Prostate gland (tissue), 2 donors: ENCODE measurements at regions of chr11 and their contacts with region 1.

Region 1: GRCh38 chr11:64688534-64688982 is 34.4 kb downstream of the NRXN2 start:
- DNase-seq: peak; percentile 75
- H3K4me3 ChIP-seq: peak overlapping the region in 1 of 2 donors; percentile 21
- H3K27ac ChIP-seq: peak overlapping the region; percentile 28 to 41
- H3K4me1 ChIP-seq: no peaks in the 10 kb centered on the region
- H3K27me3 ChIP-seq: no peaks in the 10 kb centered on the region
- CTCF ChIP-seq: peak; percentile 68 to 92 (median 89)
- POLR2A ChIP-seq: no peak

Region 2: DNA sequence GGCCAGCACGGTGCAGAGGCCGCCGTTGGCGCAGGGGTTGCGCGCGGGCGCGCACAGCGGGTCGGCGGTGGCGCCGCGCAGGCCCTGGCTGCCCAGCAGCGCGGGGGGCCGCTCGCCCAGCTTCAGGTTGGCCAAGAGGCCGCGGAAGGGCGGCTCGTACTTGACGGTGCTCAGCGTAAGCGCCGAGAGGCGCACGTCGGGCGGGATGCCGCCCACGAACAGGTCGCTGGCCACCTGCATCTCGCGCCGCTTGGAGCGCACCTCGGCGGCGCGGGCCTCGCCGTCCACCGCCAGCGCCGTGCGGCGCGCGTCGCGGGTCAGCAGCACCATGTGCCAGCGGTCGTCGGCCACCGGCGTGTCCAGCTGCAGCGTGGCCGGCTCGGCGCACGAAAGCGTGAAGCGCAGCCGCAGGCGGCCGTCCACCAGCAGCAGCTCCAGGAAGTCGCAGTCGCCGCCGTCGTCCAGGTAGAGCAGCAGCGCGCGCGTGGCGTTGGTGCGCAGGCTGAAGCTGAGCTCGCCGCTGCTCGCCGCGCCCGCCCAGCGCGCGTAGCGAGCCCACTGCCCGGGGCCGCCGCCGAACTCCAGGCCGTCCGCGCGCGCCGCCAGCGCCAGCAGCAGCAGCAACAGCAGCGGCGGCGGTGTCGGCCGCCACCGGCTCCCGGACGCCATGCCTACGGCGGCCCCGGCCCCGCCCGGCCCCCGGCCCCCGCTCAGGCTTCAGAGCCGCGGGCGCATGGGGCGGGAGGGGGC is 24.6 kb after region 1 on chr11:
- intact Hi-C with region 1: no loop called
- DNase-seq: peak; percentile 33
- H3K4me3 ChIP-seq: peak overlapping the region in 1 of 2 donors; percentile 11
- H3K27ac ChIP-seq: no peak overlapping the region
- H3K4me1 ChIP-seq: no peaks in the 10 kb centered on the region
- H3K27me3 ChIP-seq: peaks cover 32% of the 10 kb centered on the region
- CTCF ChIP-seq: no peak
- POLR2A ChIP-seq: no peak

Region 3: GRCh38 chr11:64723117-64723906 is 34.8 kb after region 1 on chr11 and contains the start of gene NRXN2:
- intact Hi-C with region 1: loop called (anchors 2 kb)
- DNase-seq: peak; percentile 76
- H3K4me3 ChIP-seq: peak within 1 kb of the TSS; percentile 57 to 60
- H3K27ac ChIP-seq: peak within 1 kb of the TSS; percentile 60 to 64
- H3K4me1 ChIP-seq: no peaks in the 10 kb centered on the region
- H3K27me3 ChIP-seq: peaks cover 18% of the 10 kb centered on the region
- CTCF ChIP-seq: peak; percentile 85 to 95 (median 88)
- POLR2A ChIP-seq: no peak
- total RNA-seq, gene NRXN2: 0.46 to 26.8 TPM